H1 (cell line): ENCODE measurements at regions of chr3 and their contacts with region 1.

Region 1: GRCh38 chr3:65425880-65426279 is 612.8 kb downstream of the MAGI1 start:
- DNase-seq: no peak
- H3K4me3 ChIP-seq: no peak overlapping the region
- H3K27ac ChIP-seq: no peak overlapping the region
- H3K4me1 ChIP-seq: no peaks in the 10 kb centered on the region
- H3K27me3 ChIP-seq: no peaks in the 10 kb centered on the region
- CTCF ChIP-seq: peak in 2 of 3 experiments; percentile 30 to 52; a peak in 2 of 4 replicates
- EP300 ChIP-seq: no peak
- POLR2A ChIP-seq: no peak
- RAD21 ChIP-seq: peak; percentile 42 to 55; a peak in 3 of 4 replicates

Region 2: DNA sequence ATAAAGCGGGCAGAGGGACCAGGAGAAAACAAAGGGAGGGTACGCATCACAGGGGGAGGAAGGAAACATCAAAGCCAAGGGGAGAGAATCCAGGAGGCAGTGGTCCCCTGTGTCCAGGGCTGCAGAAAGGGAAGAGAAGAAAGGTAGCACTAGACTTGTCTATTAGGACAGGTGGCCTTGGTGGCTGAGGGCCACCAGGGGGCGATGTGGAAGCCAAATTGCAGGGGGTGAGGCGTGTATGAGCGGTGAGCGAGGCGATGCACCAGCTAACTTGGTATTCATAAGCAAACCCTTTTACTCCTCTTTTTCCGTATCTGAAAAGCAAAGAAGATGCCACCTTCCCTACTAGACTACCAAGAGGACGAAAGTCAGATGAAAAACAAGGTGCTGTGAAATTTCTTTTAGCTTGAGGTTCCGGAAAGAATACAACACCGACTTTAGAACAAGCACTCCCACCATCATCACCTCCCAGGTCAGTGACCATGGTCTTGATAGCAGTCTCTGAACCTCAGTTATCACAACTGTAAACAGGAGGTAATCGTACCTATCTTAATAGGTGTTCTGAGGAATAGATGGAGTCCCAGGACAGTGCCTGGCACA is 83.7 kb before region 1 on chr3:
- CTCF ChIA-PET with region 1: interaction called, 10 read pairs
- POLR2A ChIA-PET with region 1: no interaction called
- DNase-seq: peak; percentile 59 to 89
- H3K4me3 ChIP-seq: no peak overlapping the region
- H3K27ac ChIP-seq: no peak overlapping the region
- H3K4me1 ChIP-seq: peaks cover 4 to 18% (median 7%) of the 10 kb centered on the region in 4 experiments; a peak in 6 of 7 replicates
- H3K27me3 ChIP-seq: no peaks in the 10 kb centered on the region
- CTCF ChIP-seq: peak; percentile 82 to 97 (median 96)
- EP300 ChIP-seq: no peak
- POLR2A ChIP-seq: no peak
- RAD21 ChIP-seq: peak; percentile 74 to 84

Region 3: DNA sequence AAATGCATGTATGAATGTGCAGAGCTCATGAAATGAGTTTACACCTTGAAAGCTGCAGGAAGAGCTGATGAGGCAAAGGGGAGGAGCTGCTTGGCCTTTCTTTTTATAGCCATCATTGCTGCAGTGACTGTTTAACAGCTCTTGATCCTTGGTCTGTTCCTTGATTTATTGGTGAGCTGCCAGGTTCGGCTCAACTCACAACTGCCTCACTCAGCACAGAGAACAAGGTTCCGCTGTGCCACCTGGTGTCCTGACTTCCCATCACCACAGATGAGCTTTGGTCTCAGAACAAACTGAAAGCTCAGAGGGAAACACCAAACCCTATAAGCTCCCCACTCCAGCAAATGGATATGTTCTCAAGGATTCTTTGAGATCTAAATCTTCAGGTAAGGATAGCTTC is 13.3 kb before region 1 on chr3:
- CTCF ChIA-PET with region 1: interaction called, 29 read pairs
- POLR2A ChIA-PET with region 1: no interaction called
- DNase-seq: no peak
- H3K4me3 ChIP-seq: no peak overlapping the region
- H3K27ac ChIP-seq: no peak overlapping the region
- H3K4me1 ChIP-seq: peaks cover 0 to 5% (median 3%) of the 10 kb centered on the region in 4 experiments; a peak in 2 of 7 replicates
- H3K27me3 ChIP-seq: no peaks in the 10 kb centered on the region
- CTCF ChIP-seq: peak; percentile 42 to 51 (median 44)
- EP300 ChIP-seq: no peak
- POLR2A ChIP-seq: no peak
- RAD21 ChIP-seq: peak; percentile 64 to 74